IMR-90 (cell line): ENCODE measurements at regions of chr2 and their contacts with region 1.

Region 1: GRCh38 chr2:46650556-46651001 is 171.2 kb downstream of the TMEM247 start:
- DNase-seq: peak; percentile 90
- ATAC-seq: peak; percentile 25
- H3K4me3 ChIP-seq: no peak overlapping the region
- H3K27ac ChIP-seq: no peak overlapping the region
- H3K4me1 ChIP-seq: peaks cover 28% of the 10 kb centered on the region
- H3K27me3 ChIP-seq: no peaks in the 10 kb centered on the region
- CTCF ChIP-seq: peak; percentile 95
- POLR2A ChIP-seq: peak; percentile 37; the same call in 1 of the 2 replicates
- RAD21 ChIP-seq: peak; percentile 90

Region 2: DNA sequence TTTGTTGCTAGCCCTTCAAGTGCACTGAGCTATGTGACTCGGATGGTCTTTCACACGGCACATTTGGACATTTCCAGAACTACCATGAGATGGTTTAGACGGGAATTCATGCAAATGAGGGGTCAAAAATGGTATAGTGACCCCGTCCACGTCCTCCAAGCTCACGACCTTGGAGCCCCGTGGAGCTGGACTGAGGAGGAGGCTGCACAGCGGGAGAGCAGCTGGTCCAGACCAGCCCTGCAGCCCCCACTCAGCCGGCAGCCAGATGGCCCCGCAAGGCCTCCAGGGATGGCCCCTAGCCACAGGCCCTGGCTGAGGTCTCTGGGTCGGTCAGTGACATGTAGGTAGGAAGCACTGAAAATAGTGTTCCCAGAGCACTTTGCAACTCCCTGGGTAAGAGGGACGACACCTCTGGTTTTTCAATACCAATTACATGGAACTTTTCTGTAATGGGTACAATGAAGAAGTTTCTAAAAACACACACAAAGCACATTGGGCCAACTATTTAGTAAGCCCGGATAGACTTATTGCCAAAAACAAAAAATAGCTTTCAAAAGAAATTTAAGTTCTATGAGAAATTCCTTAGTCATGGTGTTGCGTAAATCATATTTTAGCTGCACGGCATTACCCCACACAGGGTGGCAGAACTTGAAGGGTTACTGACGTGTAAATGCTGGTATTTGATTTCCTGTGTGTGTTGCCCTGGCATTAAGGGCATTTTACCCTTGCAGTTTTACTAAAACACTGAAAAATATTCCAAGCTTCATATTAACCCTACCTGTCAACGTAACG is 264.6 kb before region 1 on chr2:
- CTCF ChIA-PET with region 1: no interaction called
- POLR2A ChIA-PET with region 1: no interaction called
- dilution Hi-C with region 1: no loop called
- in situ Hi-C with region 1: no loop called
- intact Hi-C with region 1: no loop called
- DNase-seq: peak; percentile 40
- ATAC-seq: no peak
- H3K4me3 ChIP-seq: no peak overlapping the region
- H3K27ac ChIP-seq: peak overlapping the region; percentile 49; the same call in 1 of the 2 replicates
- H3K4me1 ChIP-seq: peaks cover 10% of the 10 kb centered on the region
- H3K27me3 ChIP-seq: no peaks in the 10 kb centered on the region
- CTCF ChIP-seq: no peak
- POLR2A ChIP-seq: no peak
- RAD21 ChIP-seq: no peak

Region 3: GRCh38 chr2:46776687-46777327 is 126.2 kb after region 1 on chr2:
- CTCF ChIA-PET with region 1: interaction called, 6 read pairs
- POLR2A ChIA-PET with region 1: no interaction called
- dilution Hi-C with region 1: no loop called
- in situ Hi-C with region 1: no loop called
- intact Hi-C with region 1: loop called (anchors 5 kb)
- DNase-seq: peak; percentile 79
- ATAC-seq: peak; percentile 56
- H3K4me3 ChIP-seq: no peak overlapping the region
- H3K27ac ChIP-seq: peak overlapping the region; percentile 31; the same call in 1 of the 2 replicates
- H3K4me1 ChIP-seq: peaks cover 26% of the 10 kb centered on the region
- H3K27me3 ChIP-seq: no peaks in the 10 kb centered on the region
- CTCF ChIP-seq: peak; percentile 86
- POLR2A ChIP-seq: no peak
- RAD21 ChIP-seq: peak; percentile 73

Region 4: GRCh38 chr2:46887028-46887885 is 236.7 kb after region 1 on chr2:
- CTCF ChIA-PET with region 1: interaction called, 12 read pairs
- POLR2A ChIA-PET with region 1: no interaction called
- dilution Hi-C with region 1: no loop called
- in situ Hi-C with region 1: no loop called
- intact Hi-C with region 1: loop called (anchors 1 kb)
- DNase-seq: peak; percentile 60
- ATAC-seq: peak; percentile 25; the same call in 1 of the 2 replicates
- H3K4me3 ChIP-seq: no peak overlapping the region
- H3K27ac ChIP-seq: peak overlapping the region; percentile 92
- H3K4me1 ChIP-seq: peaks cover 32% of the 10 kb centered on the region
- H3K27me3 ChIP-seq: no peaks in the 10 kb centered on the region
- CTCF ChIP-seq: no peak
- POLR2A ChIP-seq: no peak
- RAD21 ChIP-seq: no peak

Region 5: DNA sequence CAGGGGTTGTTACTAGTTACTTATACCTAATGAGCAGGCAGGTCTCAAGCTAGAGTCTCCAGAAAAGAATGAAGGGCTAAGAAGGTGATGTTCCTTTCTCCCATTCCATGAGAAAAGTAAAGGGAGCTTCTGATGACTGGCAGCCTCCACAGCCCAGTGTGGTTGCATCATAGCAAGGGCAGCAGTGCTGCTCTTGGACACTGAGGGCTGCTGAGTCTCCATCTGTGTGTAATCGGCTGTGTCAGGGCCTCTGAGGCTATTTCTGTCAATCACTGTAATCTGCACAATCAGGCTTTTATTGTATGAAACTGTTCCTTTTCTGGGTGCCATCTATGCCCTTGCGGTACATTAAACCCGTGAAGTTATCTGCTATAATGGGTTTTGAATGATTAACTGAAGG is 1419.8 kb after region 1 on chr2:
- CTCF ChIA-PET with region 1: no interaction called
- POLR2A ChIA-PET with region 1: no interaction called
- dilution Hi-C with region 1: no loop called
- in situ Hi-C with region 1: no loop called
- intact Hi-C with region 1: no loop called
- DNase-seq: no peak
- ATAC-seq: no peak
- H3K4me3 ChIP-seq: no peak overlapping the region
- H3K27ac ChIP-seq: no peak overlapping the region
- H3K4me1 ChIP-seq: no peaks in the 10 kb centered on the region
- H3K27me3 ChIP-seq: peaks cover 15% of the 10 kb centered on the region
- CTCF ChIP-seq: no peak
- POLR2A ChIP-seq: no peak
- RAD21 ChIP-seq: no peak